Motor neuron (in vitro differentiated cells): ENCODE measurements at regions of chr12 and their contacts with region 1.

Region 1: GRCh38 chr12:49967042-49967776 is 5.5 kb downstream of the AQP5 start:
- ATAC-seq: peak; percentile 86 to 93 (median 92)
- H3K4me3 ChIP-seq: peak overlapping the region in 4 of 5 donors; percentile 4 to 19 (median 12)
- H3K27ac ChIP-seq: no peak overlapping the region
- H3K4me1 ChIP-seq: peaks cover 4 to 26% of the 10 kb centered on the region in 2 donors

Region 2: DNA sequence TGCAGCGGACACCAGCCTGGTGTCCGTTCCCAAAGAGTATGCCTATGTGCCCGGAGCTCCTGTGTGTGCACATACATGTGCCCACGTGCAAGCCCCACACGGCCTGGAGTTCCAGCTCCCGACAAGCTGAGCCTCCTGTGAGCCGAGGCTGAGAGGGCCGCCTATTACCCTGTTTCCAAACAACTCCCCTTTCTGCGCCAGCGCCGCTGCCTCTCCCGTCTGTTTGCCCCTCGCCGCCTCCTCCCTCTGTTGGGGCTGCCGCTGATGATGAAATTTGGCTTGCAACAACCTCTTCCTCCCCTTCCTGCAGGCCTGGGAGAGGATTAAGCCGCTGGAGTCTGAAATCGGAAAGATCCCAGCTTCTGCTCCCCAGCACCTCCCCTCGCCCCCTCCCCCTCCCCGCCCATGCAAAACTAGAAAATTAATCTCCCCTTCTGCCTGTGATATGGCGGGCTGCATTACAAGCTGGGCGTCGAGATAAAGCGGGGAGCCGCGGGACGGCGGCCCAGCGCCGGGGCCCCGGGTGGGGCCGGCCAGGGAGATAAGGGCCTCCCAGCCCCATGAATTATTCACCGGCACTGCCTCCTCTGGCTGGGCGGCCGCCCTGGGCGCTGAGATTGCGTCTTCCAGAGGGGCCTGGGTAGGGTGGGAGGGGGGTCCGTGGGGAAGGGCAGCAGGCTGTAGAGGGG is 83.3 kb after region 1 on chr12:
- in situ Hi-C with region 1: loop called in 8 of 9 experiments (anchors 5 to 25 kb)
- ATAC-seq: peak; percentile 90 to 95 (median 94)
- H3K4me3 ChIP-seq: peak overlapping the region in 1 of 5 donors; percentile 5
- H3K27ac ChIP-seq: peak overlapping the region; percentile 48 to 73
- H3K4me1 ChIP-seq: peaks cover 16 to 17% of the 10 kb centered on the region in 2 donors

Region 3: DNA sequence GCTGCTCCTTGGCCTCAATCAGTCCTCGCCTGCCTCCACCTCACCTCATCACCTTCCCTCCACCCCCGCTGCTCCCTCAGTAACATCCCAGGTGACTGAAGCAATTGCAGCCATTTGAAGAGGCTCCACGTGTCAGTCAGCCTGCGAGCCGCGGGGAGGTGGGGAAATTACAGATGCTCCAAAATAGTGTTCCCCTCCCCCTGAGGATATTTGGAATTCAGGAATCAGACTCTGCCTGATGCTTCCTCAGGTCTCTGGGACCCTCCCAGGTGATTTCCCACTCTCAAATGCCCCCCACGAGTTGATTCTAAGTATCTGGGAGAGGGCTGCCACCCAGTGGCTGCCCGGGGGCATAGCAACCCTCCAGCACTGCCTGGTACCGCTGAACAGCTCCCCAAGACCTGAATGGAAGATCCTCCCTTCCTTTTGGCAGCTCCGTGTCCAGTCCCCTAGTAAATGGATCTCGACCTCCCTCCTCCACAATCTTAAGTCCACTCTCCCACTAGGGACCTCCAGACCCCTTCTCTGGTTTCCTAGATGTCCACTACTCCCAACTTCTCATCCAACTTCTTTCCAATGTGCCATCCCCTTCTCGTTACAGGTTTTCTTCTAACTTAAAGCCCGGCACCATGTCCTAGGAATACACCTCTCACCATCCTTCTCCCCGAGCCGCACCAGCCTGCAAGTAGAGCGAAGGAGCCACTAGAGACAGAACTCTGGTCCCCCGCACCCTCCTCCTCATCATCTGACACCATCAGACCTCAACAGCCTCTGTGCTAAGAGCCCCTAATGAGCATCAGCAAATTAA is 88.8 kb after region 1 on chr12:
- in situ Hi-C with region 1: loop called in 8 of 9 experiments (anchors 5 to 25 kb)
- ATAC-seq: peak in 4 of 8 experiments; percentile 3 to 25 (median 19)
- H3K4me3 ChIP-seq: peak overlapping the region in 1 of 5 donors; percentile 51
- H3K27ac ChIP-seq: no peak overlapping the region
- H3K4me1 ChIP-seq: peaks cover 20 to 23% of the 10 kb centered on the region in 2 donors

Region 4: DNA sequence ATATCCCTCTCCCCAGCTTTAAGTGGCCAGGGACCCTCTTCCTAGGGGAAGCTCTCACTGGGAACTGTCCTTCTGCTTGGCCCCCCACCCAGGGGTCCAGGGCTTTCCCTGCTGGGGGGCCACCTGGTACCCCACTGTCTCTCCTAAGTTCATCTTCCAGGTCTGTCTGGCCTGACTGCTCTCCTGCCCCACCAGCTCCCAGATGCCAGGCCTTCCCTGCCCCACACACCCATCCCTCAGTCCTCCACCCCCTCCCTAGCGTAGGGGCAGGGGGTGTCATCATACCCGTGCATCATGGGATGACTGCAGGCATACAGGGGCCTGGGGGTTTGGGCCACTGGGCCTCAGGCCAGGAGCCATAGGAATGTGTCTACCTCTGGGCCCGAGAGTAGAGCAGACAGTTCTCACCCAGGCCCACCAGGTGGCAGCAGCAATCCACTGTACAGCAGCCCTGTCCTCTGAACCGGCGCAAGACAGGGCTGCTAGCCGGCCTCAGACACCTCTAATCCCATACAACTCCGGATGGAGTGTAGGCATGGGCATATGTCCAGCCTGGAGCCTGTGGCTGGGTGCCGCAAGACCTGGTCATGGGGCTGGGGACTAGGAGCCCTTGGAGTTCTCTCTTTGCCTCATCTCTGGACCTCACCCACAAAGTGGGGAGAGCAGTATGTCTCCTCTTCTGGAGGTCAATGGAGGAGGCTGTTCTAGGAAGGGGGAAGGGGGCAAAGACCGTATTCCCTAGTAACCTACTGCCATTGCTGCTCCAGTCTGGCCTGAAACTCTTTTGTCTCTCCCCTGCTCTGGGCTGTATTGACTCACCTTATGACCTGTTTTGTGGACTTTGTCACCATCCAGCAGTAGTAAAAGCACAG is 108.0 kb after region 1 on chr12:
- in situ Hi-C with region 1: loop called in 4 of 9 experiments (anchors 10 to 25 kb)
- ATAC-seq: peak; percentile 82 to 94 (median 94)
- H3K4me3 ChIP-seq: no peak overlapping the region
- H3K27ac ChIP-seq: no peak overlapping the region
- H3K4me1 ChIP-seq: peaks cover 2 to 3% of the 10 kb centered on the region in 2 donors